ENCODE measurements at regions of chr5 and their contacts with region 1.

Region 1: GRCh38 chr5:141898448-141899049 is 20.3 kb upstream of the PCDH1 start:
- DNase-seq: no peak
- H3K4me3 ChIP-seq: no peak overlapping the region
- H3K27ac ChIP-seq: no peak overlapping the region
- H3K4me1 ChIP-seq: no peaks in the 10 kb centered on the region
- H3K27me3 ChIP-seq: no peaks in the 10 kb centered on the region
- CTCF ChIP-seq: no peak

Region 2: GRCh38 chr5:141951332-141951781 is 52.8 kb after region 1 on chr5:
- intact Hi-C with region 1: loop called (anchors 10 kb)
- DNase-seq: no peak
- H3K4me3 ChIP-seq: peak overlapping the region; percentile 65
- H3K27ac ChIP-seq: peak overlapping the region; percentile 88
- H3K4me1 ChIP-seq: peaks cover 80% of the 10 kb centered on the region
- H3K27me3 ChIP-seq: no peaks in the 10 kb centered on the region
- CTCF ChIP-seq: peak; percentile 56

Measured in left ventricle myocardium inferior (tissue), 1 donor.